Posterior vena cava (tissue), 2 donors: ENCODE measurements at regions of chr3 and their contacts with region 1.

Region 1: DNA sequence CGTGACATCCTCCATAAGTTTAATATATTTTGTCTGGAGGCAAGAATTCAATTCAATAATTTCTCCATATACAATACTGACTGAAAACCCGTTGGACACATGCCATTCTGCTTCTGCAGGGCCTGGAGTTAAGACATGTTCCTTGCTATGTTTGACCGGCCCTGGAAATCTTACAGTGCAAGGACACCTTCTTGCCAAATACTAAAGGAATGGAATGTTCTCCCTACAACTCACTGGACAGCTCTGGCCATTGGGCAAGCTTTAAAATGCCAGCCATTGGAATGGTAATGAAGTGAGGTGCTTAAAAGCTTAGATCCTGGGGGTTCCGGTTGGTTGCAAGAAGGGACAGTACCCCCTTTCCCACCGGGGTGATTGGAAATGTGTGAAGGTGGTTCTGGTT is 329.8 kb upstream of the PROK2 start:
- DNase-seq: no peak

Region 2: GRCh38 chr3:71247221-71247976 is 867.4 kb before region 1 on chr3:
- intact Hi-C with region 1: no loop called
- DNase-seq: no peak

Region 3: DNA sequence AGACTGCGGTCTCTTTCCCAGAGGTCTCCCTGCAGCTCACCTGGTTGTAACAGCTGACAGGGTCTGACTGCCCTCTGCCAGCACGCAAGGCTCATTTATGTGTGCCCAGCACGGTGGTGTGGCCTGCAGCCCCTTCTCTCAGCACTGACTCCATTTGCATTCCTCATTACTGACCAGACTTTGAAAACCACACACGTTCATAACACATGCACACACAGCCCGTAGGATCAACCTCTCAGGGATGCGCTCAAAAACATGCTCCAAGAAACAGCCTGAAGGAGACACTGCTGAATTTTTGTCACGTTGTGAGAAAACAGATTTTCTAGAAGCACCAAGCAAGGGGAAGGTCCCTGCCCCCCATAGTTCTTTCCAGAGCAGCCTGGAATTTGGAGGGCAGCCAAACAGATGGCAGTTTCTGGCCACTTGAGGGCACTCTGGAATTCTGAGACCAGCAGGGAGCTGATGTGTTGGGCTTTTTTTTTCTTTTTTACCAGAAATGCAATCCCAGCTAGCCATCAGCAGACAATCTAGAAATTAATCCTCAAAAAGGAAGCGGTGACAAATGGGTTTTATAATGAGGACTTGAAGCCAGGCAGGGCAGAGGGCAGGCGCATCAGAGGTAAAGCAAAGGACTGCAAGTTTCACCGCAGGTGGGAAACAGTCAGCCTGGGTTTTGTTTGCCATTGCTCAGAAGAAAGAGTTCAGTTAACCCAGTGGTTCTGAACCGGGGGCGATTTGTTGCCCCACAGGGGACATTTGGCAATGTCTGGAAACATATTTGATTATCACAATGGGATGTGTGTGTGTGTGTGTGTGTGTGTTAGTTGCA is 159.3 kb before region 1 on chr3:
- intact Hi-C with region 1: no loop called
- DNase-seq: peak; percentile 83

Region 4: DNA sequence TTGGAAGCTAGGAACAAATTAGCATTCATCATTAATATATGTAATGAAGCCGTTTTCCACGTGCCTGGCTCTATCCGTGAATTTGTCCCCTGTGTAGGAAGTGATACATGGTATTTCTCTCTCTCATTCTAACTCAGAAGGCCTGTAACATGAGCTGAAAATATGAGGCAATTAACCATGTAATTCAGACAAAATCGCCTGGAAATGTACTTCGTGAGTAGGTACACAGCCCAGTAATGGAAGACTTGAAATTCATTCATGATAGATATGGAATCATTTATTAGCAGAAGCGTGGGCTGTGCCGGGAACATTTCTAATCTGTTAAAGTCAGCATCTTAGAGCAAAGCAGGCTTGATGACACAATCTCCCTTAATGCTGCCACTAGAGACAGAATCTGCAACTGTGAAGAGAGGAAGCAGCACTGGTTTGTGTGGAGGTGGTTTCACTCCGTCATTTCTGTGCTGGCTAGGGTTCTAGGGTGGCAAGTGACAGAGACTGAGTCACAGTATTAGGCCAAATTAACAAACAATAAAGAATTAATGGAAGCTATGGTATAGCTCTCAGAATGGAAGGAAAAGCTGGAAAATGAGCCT is 104.8 kb before region 1 on chr3:
- intact Hi-C with region 1: no loop called
- DNase-seq: no peak

Region 5: GRCh38 chr3:72068621-72069020 is 46.2 kb before region 1 on chr3:
- intact Hi-C with region 1: no loop called
- DNase-seq: no peak

Region 6: GRCh38 chr3:72163809-72164634 is 49.2 kb after region 1 on chr3:
- intact Hi-C with region 1: loop called in 1 of 2 experiments (anchors 5 kb)
- DNase-seq: no peak